SK-N-SH (cell line): ENCODE measurements at regions of chr13 and their contacts with region 1.

Region 1: GRCh38 chr13:75876360-75877050 is 240.4 kb downstream of the LMO7 start:
- DNase-seq: peak; percentile 55
- H3K4me3 ChIP-seq: peak overlapping the region in 1 of 2 experiments; percentile 17; a peak in 1 of 4 replicates
- H3K27ac ChIP-seq: no peak overlapping the region
- H3K4me1 ChIP-seq: peaks cover 0 to 2% of the 10 kb centered on the region in 2 experiments; a peak in 2 of 4 replicates
- H3K27me3 ChIP-seq: no peaks in the 10 kb centered on the region
- CTCF ChIP-seq: peak; percentile 91
- EP300 ChIP-seq: no peak
- RAD21 ChIP-seq: peak; percentile 95

Region 2: GRCh38 chr13:75687150-75687763 is 189.2 kb before region 1 on chr13:
- CTCF ChIA-PET with region 1: interaction called, 16 read pairs
- POLR2A ChIA-PET with region 1: no interaction called
- DNase-seq: peak; percentile 10
- H3K4me3 ChIP-seq: no peak overlapping the region
- H3K27ac ChIP-seq: peak overlapping the region in 1 of 2 experiments; percentile 0; a peak in 1 of 4 replicates
- H3K4me1 ChIP-seq: peaks cover 0 to 13% of the 10 kb centered on the region in 2 experiments; a peak in 1 of 4 replicates
- H3K27me3 ChIP-seq: no peaks in the 10 kb centered on the region
- CTCF ChIP-seq: peak; percentile 72
- EP300 ChIP-seq: no peak
- RAD21 ChIP-seq: peak; percentile 65

Region 3: GRCh38 chr13:76004416-76004815 is 127.9 kb after region 1 on chr13:
- CTCF ChIA-PET with region 1: interaction called, 11 read pairs
- POLR2A ChIA-PET with region 1: no interaction called
- DNase-seq: no peak
- H3K4me3 ChIP-seq: no peak overlapping the region
- H3K27ac ChIP-seq: no peak overlapping the region
- H3K4me1 ChIP-seq: no peaks in the 10 kb centered on the region
- H3K27me3 ChIP-seq: no peaks in the 10 kb centered on the region
- CTCF ChIP-seq: no peak
- EP300 ChIP-seq: no peak
- RAD21 ChIP-seq: no peak

Region 4: DNA sequence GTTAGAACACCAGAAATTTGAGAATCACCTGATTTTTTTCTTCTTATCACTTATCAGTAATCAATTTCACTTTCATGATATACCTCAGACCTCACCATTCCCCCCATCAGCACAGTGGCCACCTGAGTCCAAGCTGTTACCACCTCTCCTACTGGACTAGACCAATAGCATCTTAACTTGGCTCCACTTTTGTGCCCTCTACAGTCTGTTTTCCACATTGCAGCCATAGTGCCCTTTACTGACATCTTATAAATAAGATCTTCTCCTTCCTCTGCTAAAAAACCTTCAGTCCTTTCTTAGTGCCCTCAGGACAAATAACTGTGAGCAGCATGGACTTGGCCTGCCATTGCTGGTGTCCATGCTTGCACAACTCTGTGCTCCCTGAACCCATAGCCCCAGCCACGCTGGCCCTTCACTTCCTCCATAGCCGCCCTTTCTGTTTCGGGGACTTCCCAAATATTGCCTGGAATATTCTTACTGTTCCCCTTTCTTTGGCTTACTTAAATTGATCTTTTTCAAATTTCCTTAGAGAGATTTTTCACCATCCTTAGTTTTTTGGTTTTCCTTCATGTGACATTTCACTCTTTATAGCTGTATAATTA is 140.4 kb after region 1 on chr13:
- CTCF ChIA-PET with region 1: interaction called, 54 read pairs
- POLR2A ChIA-PET with region 1: no interaction called
- DNase-seq: peak; percentile 17
- H3K4me3 ChIP-seq: no peak overlapping the region; a peak in 1 of 4 replicates
- H3K27ac ChIP-seq: no peak overlapping the region
- H3K4me1 ChIP-seq: peaks cover 0 to 2% of the 10 kb centered on the region in 2 experiments; a peak in 2 of 4 replicates
- H3K27me3 ChIP-seq: no peaks in the 10 kb centered on the region; the same call in 1 of the 2 replicates
- CTCF ChIP-seq: peak; percentile 68
- EP300 ChIP-seq: no peak
- RAD21 ChIP-seq: peak; percentile 63

Region 5: DNA sequence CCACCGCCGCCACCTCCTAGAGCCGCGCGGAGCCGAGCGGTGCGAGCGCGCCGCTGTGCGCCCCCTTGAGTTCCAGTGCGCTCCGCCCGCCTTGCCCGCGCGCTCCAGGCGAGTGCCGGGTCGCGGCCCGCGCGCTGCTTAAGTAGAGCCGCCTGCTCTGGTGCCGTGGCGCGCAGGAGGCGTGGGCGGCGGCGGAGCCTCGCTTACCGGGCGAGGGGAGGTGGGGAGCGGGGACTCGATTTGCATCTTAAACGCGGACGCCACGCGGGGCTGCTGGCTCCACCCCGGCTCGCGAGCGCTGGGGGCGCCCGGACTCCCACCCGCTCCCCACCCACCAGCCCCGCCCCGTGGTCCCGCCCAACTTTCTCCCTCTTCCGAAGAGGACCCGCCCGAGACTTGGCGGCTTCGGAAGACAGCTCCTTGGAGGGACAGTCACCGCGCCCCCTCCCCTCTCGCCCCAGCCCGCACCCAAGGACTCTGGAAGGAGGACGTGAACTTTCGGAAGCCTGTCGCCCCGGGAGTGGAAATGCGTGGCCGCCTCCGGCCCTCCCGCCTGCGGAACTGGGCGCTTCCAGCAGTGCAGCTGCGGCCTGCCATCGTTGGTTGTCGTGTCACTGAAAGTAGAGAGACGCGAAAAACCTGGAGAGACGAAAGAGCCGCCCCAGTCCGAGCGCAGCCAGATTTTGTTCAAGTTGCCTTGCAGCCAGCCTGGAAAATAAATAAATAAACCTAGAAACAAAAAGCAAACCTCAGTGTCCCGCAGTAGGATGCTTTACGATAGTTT is 1010.0 kb after region 1 on chr13 and contains the start of gene KCTD12:
- CTCF ChIA-PET with region 1: interaction called, 14 read pairs
- POLR2A ChIA-PET with region 1: no interaction called
- DNase-seq: peak; percentile 86
- H3K4me3 ChIP-seq: peak within 1 kb of the TSS; percentile 67 to 70
- H3K27ac ChIP-seq: peak within 1 kb of the TSS; percentile 36 to 58; a peak in 3 of 4 replicates
- H3K4me1 ChIP-seq: peaks cover 0 to 13% of the 10 kb centered on the region in 2 experiments; a peak in 2 of 4 replicates
- H3K27me3 ChIP-seq: no peaks in the 10 kb centered on the region
- CTCF ChIP-seq: 0 out of 2 replicates have a peak, but pooled peaks have one; percentile 14
- EP300 ChIP-seq: no peak
- RAD21 ChIP-seq: peak; percentile 33; the same call in 1 of the 2 replicates
- polyA plus RNA-seq, gene KCTD12: 0.93 and 1.0 TPM in 2 replicates